Natural killer cell (primary cell): ENCODE measurements at regions of chr17 and their contacts with region 1.

Region 1: DNA sequence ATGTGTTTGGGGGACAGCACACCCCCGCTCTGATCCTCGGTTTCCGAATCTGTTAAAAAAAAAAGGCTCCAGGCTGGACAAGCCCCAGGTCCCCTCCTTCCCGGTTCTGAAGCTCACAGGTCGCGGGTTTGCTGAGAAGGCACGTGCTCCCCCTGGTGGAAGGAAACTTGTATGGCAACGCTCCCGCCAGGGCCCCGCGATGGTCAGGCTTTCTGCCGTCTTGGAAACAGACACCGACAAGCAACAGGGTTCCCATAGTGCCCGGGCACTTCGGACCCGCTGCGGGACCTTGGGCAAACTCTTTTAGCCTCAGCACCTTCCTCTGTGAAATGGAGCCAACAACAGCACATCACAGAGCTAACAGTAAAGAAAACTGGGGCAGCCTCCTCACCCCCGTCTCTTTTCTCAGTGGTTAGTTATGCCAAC is 219.0 kb downstream of the RBFOX3 start:
- DNase-seq: peak; percentile 52 to 82
- ATAC-seq: peak in 2 of 3 donors; percentile 70 to 75
- H3K4me3 ChIP-seq: no peak overlapping the region
- H3K4me3 Mint-ChIP-seq: no peak overlapping the region
- H3K27ac ChIP-seq: no peak overlapping the region
- H3K27ac Mint-ChIP-seq: no peak overlapping the region
- H3K4me1 ChIP-seq: peaks cover 5% of the 10 kb centered on the region
- H3K4me1 Mint-ChIP-seq: peaks cover 0 to 24% of the 10 kb centered on the region in 2 donors
- H3K27me3 ChIP-seq: peaks cover 5% of the 10 kb centered on the region
- H3K27me3 Mint-ChIP-seq: peaks cover 15 to 40% of the 10 kb centered on the region in 2 donors
- CTCF ChIP-seq: peak; percentile 84

Region 2: DNA sequence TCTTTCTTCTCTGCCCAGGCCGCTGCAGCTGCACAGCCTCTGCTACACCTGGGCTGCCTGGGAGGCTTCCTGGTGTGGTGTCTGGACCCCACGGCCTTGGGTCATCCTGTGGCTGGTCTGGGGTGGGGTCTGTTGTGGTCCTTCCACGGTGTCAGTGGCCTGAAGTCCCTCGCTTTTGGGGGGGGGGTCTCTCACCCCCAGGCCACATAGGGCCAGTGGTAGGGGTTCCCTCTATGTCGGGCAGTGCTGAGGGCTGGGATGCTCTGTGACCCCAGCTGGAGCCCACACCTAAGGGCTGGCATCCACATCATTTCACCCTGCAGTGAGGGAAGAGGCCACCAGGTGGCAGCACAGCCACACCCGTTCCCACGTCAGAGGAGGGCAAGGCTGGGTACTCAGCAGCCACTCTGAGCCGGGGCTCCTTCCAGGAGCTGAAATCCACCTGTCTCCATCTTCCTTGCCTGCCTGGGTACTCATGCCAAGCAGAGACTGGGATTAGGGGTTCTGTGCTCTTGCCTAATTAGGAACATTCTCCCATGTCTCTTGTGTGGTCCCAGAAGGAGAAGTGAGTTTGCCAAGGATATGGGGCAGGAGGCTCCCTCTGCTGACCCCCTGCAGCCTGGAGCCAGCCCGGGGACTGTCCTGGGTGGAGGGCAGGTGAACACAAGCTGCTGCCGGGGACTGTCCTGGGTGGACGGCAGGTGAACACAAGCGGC is 304.2 kb before region 1 on chr17:
- intact Hi-C with region 1: loop called (anchors 2 kb)
- DNase-seq: peak; percentile 64 to 85
- ATAC-seq: peak; percentile 85 to 87 (median 86)
- H3K4me3 ChIP-seq: no peak overlapping the region
- H3K4me3 Mint-ChIP-seq: no peak overlapping the region
- H3K27ac ChIP-seq: no peak overlapping the region
- H3K27ac Mint-ChIP-seq: no peak overlapping the region
- H3K4me1 ChIP-seq: peaks cover under 1% of the 10 kb centered on the region
- H3K4me1 Mint-ChIP-seq: peaks cover 6 to 7% of the 10 kb centered on the region in 2 donors
- H3K27me3 ChIP-seq: no peaks in the 10 kb centered on the region
- H3K27me3 Mint-ChIP-seq: peaks cover 0 to 4% of the 10 kb centered on the region in 2 donors
- CTCF ChIP-seq: peak; percentile 66